ENCODE measurements at regions of chr10 and their contacts with region 1.

Region 1: DNA sequence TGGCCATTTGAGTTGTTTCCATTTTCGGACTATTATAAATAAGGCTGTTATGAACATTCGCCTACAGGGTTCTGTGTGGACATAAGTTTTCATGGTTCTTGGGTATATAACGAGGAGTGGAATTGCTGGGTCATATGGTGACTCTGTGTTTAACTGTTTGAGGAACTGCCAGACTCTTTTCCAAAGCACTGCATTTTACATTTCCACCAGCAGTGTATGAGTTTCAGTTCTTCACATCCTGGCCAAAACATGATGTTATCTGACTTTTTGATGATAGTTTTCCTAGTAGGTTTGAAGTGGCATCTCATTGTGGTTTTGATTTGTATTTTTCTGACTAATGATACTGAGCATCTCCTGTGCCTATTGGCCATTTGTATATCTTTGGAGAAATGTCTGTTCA is 5.4 kb downstream of the SUV39H2 start:
- DNase-seq: no peak
- H3K4me3 Mint-ChIP-seq: peak overlapping the region; percentile 6
- H3K27ac Mint-ChIP-seq: peak overlapping the region; percentile 34
- H3K4me1 Mint-ChIP-seq: peaks cover 31% of the 10 kb centered on the region
- H3K27me3 Mint-ChIP-seq: no peaks in the 10 kb centered on the region

Region 2: GRCh38 chr10:14904316-14904732 is 20.2 kb after region 1 on chr10:
- intact Hi-C with region 1: loop called (anchors 2 kb)
- DNase-seq: no peak
- H3K4me3 Mint-ChIP-seq: no peak overlapping the region
- H3K27ac Mint-ChIP-seq: no peak overlapping the region
- H3K4me1 Mint-ChIP-seq: peaks cover 6% of the 10 kb centered on the region
- H3K27me3 Mint-ChIP-seq: no peaks in the 10 kb centered on the region

Region 3: DNA sequence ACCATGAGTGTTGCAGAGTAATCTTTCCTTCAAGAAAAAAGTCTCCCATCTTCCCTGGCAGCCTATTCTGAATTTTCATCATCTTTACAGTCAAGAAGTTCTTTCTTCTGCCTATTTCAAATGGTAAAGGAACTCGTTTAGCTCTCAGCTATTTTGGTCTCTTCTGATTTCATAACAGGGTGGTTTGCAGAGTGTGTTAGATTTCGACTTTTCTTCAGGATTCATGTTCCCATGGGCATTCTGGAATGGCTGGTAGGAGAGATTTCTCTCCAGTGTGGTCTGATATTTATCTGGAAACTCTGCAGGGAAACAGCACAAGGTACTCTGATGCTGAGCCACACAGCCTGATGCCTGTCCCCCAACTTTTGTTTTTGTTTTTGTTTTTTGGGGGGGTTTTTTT is 598.1 kb after region 1 on chr10:
- intact Hi-C with region 1: no loop called
- DNase-seq: no peak
- H3K4me3 Mint-ChIP-seq: no peak overlapping the region
- H3K27ac Mint-ChIP-seq: no peak overlapping the region
- H3K4me1 Mint-ChIP-seq: no peaks in the 10 kb centered on the region
- H3K27me3 Mint-ChIP-seq: peaks cover 11% of the 10 kb centered on the region

Measured in activated T-helper 1 cell treated with anti-CD3 and anti-CD28 coated beads, Interleukin-12 subunit alpha, Interleukin-12 subunit beta, Interleukin-2, Interleukin-4 antibody, amounts not matched to agents 30 ng/mL and 10 ng/mL and 1 ng/mL, durations not matched to agents 14 hours and 24 hours and 36 hours (primary cell).